SK-N-SH (cell line): ENCODE measurements at regions of chr22 and their contacts with region 1.

Region 1: GRCh38 chr22:24379536-24379935 is 47.9 kb upstream of the ADORA2A start:
- DNase-seq: no peak
- H3K4me3 ChIP-seq: peak overlapping the region in 1 of 2 experiments; percentile 23; a peak in 1 of 4 replicates
- H3K27ac ChIP-seq: peak overlapping the region; percentile 75 to 88
- H3K4me1 ChIP-seq: peaks cover 10 to 20% of the 10 kb centered on the region in 2 experiments
- H3K27me3 ChIP-seq: no peaks in the 10 kb centered on the region
- CTCF ChIP-seq: no peak
- EP300 ChIP-seq: peak in 1 of 2 experiments; percentile 54; a peak in 1 of 4 replicates
- RAD21 ChIP-seq: no peak

Region 2: GRCh38 chr22:24043958-24044357 is 335.6 kb before region 1 on chr22:
- CTCF ChIA-PET with region 1: no interaction called
- POLR2A ChIA-PET with region 1: no interaction called
- DNase-seq: no peak
- H3K4me3 ChIP-seq: no peak overlapping the region
- H3K27ac ChIP-seq: no peak overlapping the region
- H3K4me1 ChIP-seq: no peaks in the 10 kb centered on the region; a peak in 1 of 4 replicates
- H3K27me3 ChIP-seq: no peaks in the 10 kb centered on the region
- CTCF ChIP-seq: no peak
- EP300 ChIP-seq: no peak
- RAD21 ChIP-seq: no peak

Region 3: GRCh38 chr22:24402460-24403192 is 23.1 kb after region 1 on chr22:
- CTCF ChIA-PET with region 1: interaction called, 7 read pairs
- POLR2A ChIA-PET with region 1: interaction called, 17 read pairs
- DNase-seq: peak; percentile 75
- H3K4me3 ChIP-seq: peak overlapping the region in 1 of 2 experiments; percentile 9; a peak in 1 of 4 replicates
- H3K27ac ChIP-seq: peak overlapping the region; percentile 78 to 100
- H3K4me1 ChIP-seq: peaks cover 30 to 82% of the 10 kb centered on the region in 2 experiments
- H3K27me3 ChIP-seq: no peaks in the 10 kb centered on the region
- CTCF ChIP-seq: no peak
- EP300 ChIP-seq: peak; percentile 75 to 91; a peak in 3 of 4 replicates
- RAD21 ChIP-seq: peak; percentile 44

Region 4: DNA sequence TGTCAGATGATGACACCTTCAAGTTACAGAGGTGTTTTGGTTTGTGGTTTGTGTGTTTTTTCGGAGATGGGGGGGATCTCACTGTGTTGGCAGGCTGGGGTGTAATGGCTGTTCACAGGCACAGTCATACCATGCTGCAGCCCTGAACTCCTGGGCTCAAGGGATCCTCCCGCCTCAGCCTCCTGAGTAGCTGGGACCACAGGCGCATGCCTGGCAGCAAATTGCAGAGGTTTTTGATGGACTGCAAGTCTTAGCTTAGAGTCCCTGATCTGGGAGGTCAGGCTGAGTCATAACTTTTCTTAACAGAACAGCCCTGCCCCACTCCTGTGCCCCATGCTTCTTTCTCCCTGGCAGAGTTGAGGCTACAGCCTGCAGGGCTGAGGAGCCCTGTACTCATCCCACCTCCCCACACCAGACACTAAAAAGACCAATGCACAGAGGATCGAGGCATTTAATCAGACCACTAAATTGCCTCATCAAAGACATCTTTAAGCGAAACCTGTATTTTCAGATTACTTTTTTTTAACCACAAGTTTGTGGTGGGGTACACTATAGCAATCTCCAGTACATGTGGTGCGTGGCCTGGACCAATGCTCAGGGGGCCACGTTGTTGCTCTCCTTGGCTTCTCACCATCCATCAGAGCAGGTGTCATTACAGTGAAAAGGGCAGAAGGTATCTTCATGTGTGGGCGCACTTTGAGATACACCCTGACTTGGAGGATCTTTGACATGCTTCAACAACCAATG is 30.7 kb after region 1 on chr22:
- CTCF ChIA-PET with region 1: interaction called, 3 read pairs
- POLR2A ChIA-PET with region 1: interaction called, 10 read pairs
- DNase-seq: peak; percentile 6
- H3K4me3 ChIP-seq: no peak overlapping the region
- H3K27ac ChIP-seq: peak overlapping the region in 1 of 2 experiments; percentile 18; a peak in 1 of 4 replicates
- H3K4me1 ChIP-seq: peaks cover 6 to 50% of the 10 kb centered on the region in 2 experiments; a peak in 2 of 4 replicates
- H3K27me3 ChIP-seq: no peaks in the 10 kb centered on the region
- CTCF ChIP-seq: no peak
- EP300 ChIP-seq: no peak
- RAD21 ChIP-seq: no peak

Region 5: GRCh38 chr22:24542641-24543040 is 163.1 kb after region 1 on chr22:
- CTCF ChIA-PET with region 1: no interaction called
- POLR2A ChIA-PET with region 1: no interaction called
- DNase-seq: no peak
- H3K4me3 ChIP-seq: no peak overlapping the region
- H3K27ac ChIP-seq: no peak overlapping the region
- H3K4me1 ChIP-seq: peaks cover 7 to 8% of the 10 kb centered on the region in 2 experiments; a peak in 2 of 4 replicates
- H3K27me3 ChIP-seq: no peaks in the 10 kb centered on the region
- CTCF ChIP-seq: no peak
- EP300 ChIP-seq: no peak
- RAD21 ChIP-seq: no peak